ENCODE measurements at regions of chr18 and their contacts with region 1.

Region 1: GRCh38 chr18:32771169-32771751 is 1.6 kb downstream of the KLHL14 start:
- DNase-seq: peak; percentile 56
- ATAC-seq: peak; percentile 26
- H3K4me3 ChIP-seq: peak overlapping the region; percentile 65 to 93 (median 82)
- H3K4me3 Mint-ChIP-seq: peak overlapping the region; percentile 99
- H3K27ac ChIP-seq: peak overlapping the region; percentile 75
- H3K27ac Mint-ChIP-seq: peak overlapping the region; percentile 93
- H3K4me1 ChIP-seq: peaks cover 43 to 48% of the 10 kb centered on the region in 2 donors
- H3K4me1 Mint-ChIP-seq: peaks cover 53% of the 10 kb centered on the region
- H3K27me3 ChIP-seq: no peaks in the 10 kb centered on the region
- H3K27me3 Mint-ChIP-seq: no peaks in the 10 kb centered on the region
- CTCF ChIP-seq: no peak

Region 2: DNA sequence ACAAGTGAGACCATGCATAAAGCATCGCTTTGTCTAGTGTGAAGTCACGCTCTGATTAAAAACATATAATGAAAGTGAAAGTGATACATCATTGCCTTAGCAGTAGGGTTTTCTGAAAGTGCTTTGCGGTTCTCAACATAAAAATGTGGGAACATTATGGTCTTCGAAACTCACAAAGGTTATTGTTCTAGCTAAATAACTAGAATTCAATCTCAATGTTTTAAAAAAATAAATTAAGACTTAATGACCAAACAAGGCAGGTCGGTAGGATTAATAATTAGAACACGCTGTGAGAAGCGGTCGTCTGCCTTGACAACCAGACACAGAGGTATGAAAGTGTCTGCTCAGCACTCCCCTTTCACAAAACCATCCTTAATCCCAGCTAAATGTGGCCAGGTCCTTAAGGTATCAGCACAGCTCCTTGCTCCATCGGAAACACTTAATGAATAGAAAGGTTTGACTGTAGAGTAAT is 40.6 kb before region 1 on chr18:
- CTCF ChIA-PET with region 1: no interaction called
- POLR2A ChIA-PET with region 1: no interaction called
- intact Hi-C with region 1: loop called (anchors 2 kb)
- DNase-seq: peak; percentile 71
- ATAC-seq: peak; percentile 87
- H3K4me3 ChIP-seq: peak overlapping the region in 3 of 5 experiments; percentile 34 to 51 (median 35)
- H3K4me3 Mint-ChIP-seq: peak overlapping the region; percentile 85
- H3K27ac ChIP-seq: peak overlapping the region; percentile 39 to 60
- H3K27ac Mint-ChIP-seq: peak overlapping the region; percentile 88
- H3K4me1 ChIP-seq: peaks cover 17 to 27% of the 10 kb centered on the region in 2 donors
- H3K4me1 Mint-ChIP-seq: peaks cover 39% of the 10 kb centered on the region
- H3K27me3 ChIP-seq: no peaks in the 10 kb centered on the region
- H3K27me3 Mint-ChIP-seq: no peaks in the 10 kb centered on the region
- CTCF ChIP-seq: no peak

Region 3: DNA sequence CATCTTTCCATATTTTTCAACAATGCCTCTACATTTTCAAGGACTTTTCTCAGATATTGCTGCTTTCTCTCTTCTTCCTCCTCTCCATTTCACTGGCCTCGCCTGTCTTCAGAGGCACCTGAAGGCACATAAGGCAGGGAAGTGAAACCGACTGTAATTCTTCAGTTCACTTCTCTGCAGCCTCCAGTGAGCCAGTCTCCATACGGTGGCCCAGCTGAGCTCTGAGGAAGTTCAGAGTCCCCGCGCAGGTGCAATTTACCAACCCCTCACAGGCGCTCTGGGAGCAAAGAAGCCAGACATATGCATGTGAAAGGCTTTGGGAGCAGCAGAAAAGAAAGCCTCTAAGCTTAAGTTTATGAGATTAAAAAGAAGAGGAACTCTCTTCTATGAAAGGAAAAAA is 10.9 kb before region 1 on chr18:
- CTCF ChIA-PET with region 1: interaction called, 12 read pairs
- POLR2A ChIA-PET with region 1: interaction called, 15 read pairs
- intact Hi-C with region 1: loop called (anchors 1 kb)
- DNase-seq: peak; percentile 91
- ATAC-seq: peak; percentile 99
- H3K4me3 ChIP-seq: peak overlapping the region in 2 of 5 experiments; percentile 20 to 34
- H3K4me3 Mint-ChIP-seq: peak overlapping the region; percentile 52
- H3K27ac ChIP-seq: peak overlapping the region; percentile 76 to 81
- H3K27ac Mint-ChIP-seq: peak overlapping the region; percentile 81
- H3K4me1 ChIP-seq: peaks cover 60 to 91% of the 10 kb centered on the region in 2 donors
- H3K4me1 Mint-ChIP-seq: peaks cover 84% of the 10 kb centered on the region
- H3K27me3 ChIP-seq: no peaks in the 10 kb centered on the region
- H3K27me3 Mint-ChIP-seq: no peaks in the 10 kb centered on the region
- CTCF ChIP-seq: no peak

Region 4: DNA sequence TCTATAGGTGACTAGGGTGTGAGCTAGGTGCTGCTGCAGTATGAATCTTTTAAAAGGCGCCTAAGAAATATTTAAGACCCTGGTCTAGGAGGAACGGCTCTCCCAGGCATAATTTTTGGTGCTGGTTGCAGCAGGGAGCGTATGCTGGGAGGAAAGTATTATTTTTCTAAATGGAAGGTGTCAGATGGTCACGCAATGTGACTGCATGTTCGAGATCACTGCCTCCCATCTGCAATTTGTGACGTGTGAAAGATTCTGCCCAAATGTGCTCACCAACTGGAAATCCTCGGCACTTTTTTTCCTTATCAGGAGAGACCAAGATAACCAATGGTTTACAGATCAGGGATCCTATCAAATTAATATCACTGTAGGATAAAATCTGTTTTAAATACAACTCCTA is 97.1 kb after region 1 on chr18:
- CTCF ChIA-PET with region 1: interaction called, 5 read pairs
- POLR2A ChIA-PET with region 1: no interaction called
- intact Hi-C with region 1: loop called (anchors 2 kb)
- DNase-seq: peak; percentile 72
- ATAC-seq: peak; percentile 56
- H3K4me3 ChIP-seq: peak overlapping the region in 2 of 5 experiments; percentile 32 to 57
- H3K4me3 Mint-ChIP-seq: peak overlapping the region; percentile 69
- H3K27ac ChIP-seq: peak overlapping the region; percentile 88 to 90
- H3K27ac Mint-ChIP-seq: peak overlapping the region; percentile 86
- H3K4me1 ChIP-seq: peaks cover 69 to 74% of the 10 kb centered on the region in 2 donors
- H3K4me1 Mint-ChIP-seq: peaks cover 76% of the 10 kb centered on the region
- H3K27me3 ChIP-seq: no peaks in the 10 kb centered on the region
- H3K27me3 Mint-ChIP-seq: no peaks in the 10 kb centered on the region
- CTCF ChIP-seq: no peak

Region 5: GRCh38 chr18:32919799-32920198 is 148.5 kb after region 1 on chr18:
- CTCF ChIA-PET with region 1: interaction called, 40 read pairs
- POLR2A ChIA-PET with region 1: interaction called, 9 read pairs
- intact Hi-C with region 1: loop called (anchors 2 kb)
- DNase-seq: peak; percentile 87
- ATAC-seq: peak; percentile 99
- H3K4me3 ChIP-seq: no peak overlapping the region
- H3K4me3 Mint-ChIP-seq: peak overlapping the region; percentile 49
- H3K27ac ChIP-seq: peak overlapping the region in 1 of 2 donors; percentile 24
- H3K27ac Mint-ChIP-seq: no peak overlapping the region
- H3K4me1 ChIP-seq: peaks cover 43 to 52% of the 10 kb centered on the region in 2 donors
- H3K4me1 Mint-ChIP-seq: peaks cover 44% of the 10 kb centered on the region
- H3K27me3 ChIP-seq: no peaks in the 10 kb centered on the region
- H3K27me3 Mint-ChIP-seq: no peaks in the 10 kb centered on the region
- CTCF ChIP-seq: peak; percentile 97

Region 6: DNA sequence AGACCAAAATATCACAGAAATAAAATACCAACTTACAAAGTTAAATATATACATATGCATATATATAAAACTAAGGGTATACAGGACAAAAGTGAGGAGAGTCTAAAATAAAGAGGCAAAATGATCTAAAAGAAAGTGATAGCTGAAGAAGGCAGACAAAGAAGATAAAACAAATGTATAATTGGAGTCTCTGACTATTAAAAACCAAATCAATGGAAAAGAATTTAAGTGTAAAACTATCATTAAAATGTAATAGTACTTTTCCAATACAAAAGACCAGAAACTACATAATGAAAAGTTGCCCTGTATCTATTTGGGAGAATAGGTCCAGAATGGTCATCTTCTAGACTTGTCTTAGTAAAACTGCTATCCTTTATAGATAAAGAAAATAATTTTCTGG is 269.0 kb after region 1 on chr18:
- CTCF ChIA-PET with region 1: no interaction called
- POLR2A ChIA-PET with region 1: no interaction called
- intact Hi-C with region 1: no loop called
- DNase-seq: no peak
- ATAC-seq: no peak
- H3K4me3 ChIP-seq: no peak overlapping the region
- H3K4me3 Mint-ChIP-seq: no peak overlapping the region
- H3K27ac ChIP-seq: no peak overlapping the region
- H3K27ac Mint-ChIP-seq: no peak overlapping the region
- H3K4me1 ChIP-seq: no peaks in the 10 kb centered on the region
- H3K4me1 Mint-ChIP-seq: no peaks in the 10 kb centered on the region
- H3K27me3 ChIP-seq: peaks cover 0 to 2% (median 0%) of the 10 kb centered on the region in 4 experiments
- H3K27me3 Mint-ChIP-seq: no peaks in the 10 kb centered on the region
- CTCF ChIP-seq: no peak

Region 7: GRCh38 chr18:33184958-33185357 is 413.7 kb after region 1 on chr18:
- CTCF ChIA-PET with region 1: no interaction called
- POLR2A ChIA-PET with region 1: no interaction called
- intact Hi-C with region 1: no loop called
- DNase-seq: no peak
- ATAC-seq: no peak
- H3K4me3 ChIP-seq: no peak overlapping the region
- H3K4me3 Mint-ChIP-seq: no peak overlapping the region
- H3K27ac ChIP-seq: no peak overlapping the region
- H3K27ac Mint-ChIP-seq: no peak overlapping the region
- H3K4me1 ChIP-seq: no peaks in the 10 kb centered on the region
- H3K4me1 Mint-ChIP-seq: peaks cover 4% of the 10 kb centered on the region
- H3K27me3 ChIP-seq: no peaks in the 10 kb centered on the region
- H3K27me3 Mint-ChIP-seq: no peaks in the 10 kb centered on the region
- CTCF ChIP-seq: no peak

Region 8: GRCh38 chr18:33660696-33661310 is 889.5 kb after region 1 on chr18:
- CTCF ChIA-PET with region 1: no interaction called
- POLR2A ChIA-PET with region 1: no interaction called
- intact Hi-C with region 1: no loop called
- DNase-seq: no peak
- ATAC-seq: no peak
- H3K4me3 ChIP-seq: no peak overlapping the region
- H3K4me3 Mint-ChIP-seq: no peak overlapping the region
- H3K27ac ChIP-seq: no peak overlapping the region
- H3K27ac Mint-ChIP-seq: no peak overlapping the region
- H3K4me1 ChIP-seq: no peaks in the 10 kb centered on the region
- H3K4me1 Mint-ChIP-seq: no peaks in the 10 kb centered on the region
- H3K27me3 ChIP-seq: no peaks in the 10 kb centered on the region
- H3K27me3 Mint-ChIP-seq: no peaks in the 10 kb centered on the region
- CTCF ChIP-seq: no peak

Measured in B cell (primary cell).